ENCODE measurements at regions of chr6 and their contacts with region 1.

Region 1: GRCh38 chr6:43667245-43668150 is 20.1 kb downstream of the MRPS18A start:
- DNase-seq: no peak
- H3K4me3 ChIP-seq: peak overlapping the region; percentile 36; the same call in 1 of the 2 replicates
- H3K27ac ChIP-seq: peak overlapping the region; percentile 21
- H3K27me3 ChIP-seq: peaks cover 5% of the 10 kb centered on the region
- CTCF ChIP-seq: peak; percentile 97

Region 2: GRCh38 chr6:43608310-43608763 is 59.2 kb before region 1 on chr6:
- CTCF ChIA-PET with region 1: interaction called, 10 read pairs
- POLR2A ChIA-PET with region 1: no interaction called
- DNase-seq: peak; percentile 61
- H3K4me3 ChIP-seq: no peak overlapping the region
- H3K27ac ChIP-seq: no peak overlapping the region
- H3K27me3 ChIP-seq: no peaks in the 10 kb centered on the region
- CTCF ChIP-seq: peak; percentile 93

Region 3: DNA sequence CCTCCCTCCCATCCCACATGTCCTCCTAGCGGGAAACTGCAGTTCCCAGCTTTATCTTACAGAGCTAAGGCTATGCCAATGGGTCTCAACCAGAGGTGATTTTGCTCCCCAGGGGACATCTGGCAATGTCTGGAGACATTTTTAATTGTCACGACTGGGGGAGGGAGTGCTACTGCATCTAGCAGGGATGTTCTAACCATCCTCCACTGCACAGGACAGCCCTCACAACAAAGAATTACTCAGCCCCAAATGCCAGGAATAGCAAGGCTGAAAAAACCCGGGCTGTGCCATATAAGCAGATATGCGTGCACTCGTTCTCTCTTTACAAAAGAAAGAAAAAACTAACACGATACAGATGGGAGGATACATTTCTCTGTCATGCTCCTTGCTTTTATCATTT is 11.6 kb after region 1 on chr6:
- CTCF ChIA-PET with region 1: interaction called, 11 read pairs
- POLR2A ChIA-PET with region 1: interaction called, 3 read pairs
- DNase-seq: no peak
- H3K4me3 ChIP-seq: no peak overlapping the region
- H3K27ac ChIP-seq: no peak overlapping the region
- H3K27me3 ChIP-seq: no peaks in the 10 kb centered on the region
- CTCF ChIP-seq: no peak

Region 4: GRCh38 chr6:43774776-43775534 is 107.5 kb after region 1 on chr6:
- CTCF ChIA-PET with region 1: interaction called, 33 read pairs
- POLR2A ChIA-PET with region 1: interaction called, 8 read pairs
- DNase-seq: no peak
- H3K4me3 ChIP-seq: peak overlapping the region; percentile 96
- H3K27ac ChIP-seq: peak overlapping the region; percentile 39
- H3K27me3 ChIP-seq: no peaks in the 10 kb centered on the region
- CTCF ChIP-seq: peak; percentile 94

Region 5: GRCh38 chr6:43833223-43833995 is 165.9 kb after region 1 on chr6:
- CTCF ChIA-PET with region 1: no interaction called
- POLR2A ChIA-PET with region 1: no interaction called
- DNase-seq: no peak
- H3K4me3 ChIP-seq: no peak overlapping the region
- H3K27ac ChIP-seq: no peak overlapping the region
- H3K27me3 ChIP-seq: peaks cover 17% of the 10 kb centered on the region
- CTCF ChIP-seq: no peak

Region 6: GRCh38 chr6:43978473-43979346 is 311.2 kb after region 1 on chr6:
- CTCF ChIA-PET with region 1: no interaction called
- POLR2A ChIA-PET with region 1: no interaction called
- DNase-seq: no peak
- H3K4me3 ChIP-seq: no peak overlapping the region
- H3K27ac ChIP-seq: no peak overlapping the region
- H3K27me3 ChIP-seq: no peaks in the 10 kb centered on the region
- CTCF ChIP-seq: no peak

Measured in AG04450 (cell line).